ENCODE measurements at regions of chr3 and their contacts with region 1.

Region 1: GRCh38 chr3:155744626-155745324 is at the start of gene PLCH1:
- DNase-seq: peak; percentile 73
- ATAC-seq: peak; percentile 78
- H3K4me3 ChIP-seq: peak within 1 kb of the TSS; percentile 74 to 99 (median 76)
- H3K27ac ChIP-seq: peak within 1 kb of the TSS; percentile 62
- H3K4me1 ChIP-seq: peaks cover 65% of the 10 kb centered on the region
- H3K27me3 ChIP-seq: peaks cover 0 to 3% of the 10 kb centered on the region in 2 experiments; a peak in 2 of 5 replicates
- CTCF ChIP-seq: peak; percentile 27; the same call in 1 of the 2 replicates
- EP300 ChIP-seq: no peak
- POLR2A ChIP-seq: no peak
- RAD21 ChIP-seq: no peak
- total RNA-seq, gene PLCH1: 3.0 and 4.4 TPM in 2 replicates

Region 2: DNA sequence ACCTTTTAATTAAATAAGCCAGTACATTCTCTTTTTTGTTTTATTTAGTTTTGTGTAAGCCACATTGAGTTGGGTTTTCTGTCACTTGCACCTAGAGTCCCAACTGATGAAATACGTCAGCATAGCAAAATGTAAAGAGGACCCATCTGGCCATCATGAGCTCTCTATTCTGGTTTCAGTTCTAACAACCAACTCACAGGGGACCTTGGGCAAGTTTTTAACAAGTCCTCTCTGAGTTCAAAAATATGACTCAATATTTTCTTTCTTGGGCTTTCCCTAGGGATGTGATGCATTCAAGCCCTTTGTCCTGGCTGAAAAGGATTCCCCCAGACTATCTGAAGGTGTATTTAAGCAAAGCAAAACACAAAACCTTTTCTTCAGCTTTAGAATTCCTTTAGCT is 32.8 kb before region 1 on chr3:
- CTCF ChIA-PET with region 1: interaction called, 3 read pairs
- POLR2A ChIA-PET with region 1: no interaction called
- in situ Hi-C with region 1: no loop called
- intact Hi-C with region 1: loop called (anchors 1 kb)
- DNase-seq: no peak
- ATAC-seq: no peak
- H3K4me3 ChIP-seq: no peak overlapping the region
- H3K27ac ChIP-seq: no peak overlapping the region
- H3K4me1 ChIP-seq: peaks cover 40% of the 10 kb centered on the region
- H3K27me3 ChIP-seq: no peaks in the 10 kb centered on the region
- CTCF ChIP-seq: no peak
- EP300 ChIP-seq: no peak
- POLR2A ChIP-seq: no peak
- RAD21 ChIP-seq: no peak

Region 3: GRCh38 chr3:155778462-155778861 is 33.7 kb after region 1 on chr3:
- CTCF ChIA-PET with region 1: no interaction called
- POLR2A ChIA-PET with region 1: no interaction called
- in situ Hi-C with region 1: no loop called
- intact Hi-C with region 1: loop called (anchors 2 kb)
- DNase-seq: no peak
- ATAC-seq: no peak
- H3K4me3 ChIP-seq: no peak overlapping the region
- H3K27ac ChIP-seq: no peak overlapping the region
- H3K4me1 ChIP-seq: no peaks in the 10 kb centered on the region
- H3K27me3 ChIP-seq: no peaks in the 10 kb centered on the region
- CTCF ChIP-seq: no peak
- EP300 ChIP-seq: no peak
- POLR2A ChIP-seq: no peak
- RAD21 ChIP-seq: no peak

Region 4: GRCh38 chr3:155805802-155806618 is 61.2 kb after region 1 on chr3 and contains the start of gene C3orf33:
- CTCF ChIA-PET with region 1: no interaction called
- POLR2A ChIA-PET with region 1: interaction called, 38 read pairs
- in situ Hi-C with region 1: no loop called
- intact Hi-C with region 1: loop called (anchors 2 kb)
- DNase-seq: peak; percentile 30
- ATAC-seq: peak; percentile 93
- H3K4me3 ChIP-seq: peak within 1 kb of the TSS; percentile 87 to 95 (median 94)
- H3K27ac ChIP-seq: peak within 1 kb of the TSS; percentile 89
- H3K4me1 ChIP-seq: peaks cover 18% of the 10 kb centered on the region
- H3K27me3 ChIP-seq: no peaks in the 10 kb centered on the region
- CTCF ChIP-seq: peak; percentile 89
- EP300 ChIP-seq: peak in 1 of 2 experiments; percentile 3; a peak in 1 of 4 replicates
- POLR2A ChIP-seq: peak; percentile 5 to 44; a peak in 1 of 4 replicates
- RAD21 ChIP-seq: peak; percentile 86
- total RNA-seq, gene C3orf33: 8.2 and 12.6 TPM in 2 replicates

Region 5: DNA sequence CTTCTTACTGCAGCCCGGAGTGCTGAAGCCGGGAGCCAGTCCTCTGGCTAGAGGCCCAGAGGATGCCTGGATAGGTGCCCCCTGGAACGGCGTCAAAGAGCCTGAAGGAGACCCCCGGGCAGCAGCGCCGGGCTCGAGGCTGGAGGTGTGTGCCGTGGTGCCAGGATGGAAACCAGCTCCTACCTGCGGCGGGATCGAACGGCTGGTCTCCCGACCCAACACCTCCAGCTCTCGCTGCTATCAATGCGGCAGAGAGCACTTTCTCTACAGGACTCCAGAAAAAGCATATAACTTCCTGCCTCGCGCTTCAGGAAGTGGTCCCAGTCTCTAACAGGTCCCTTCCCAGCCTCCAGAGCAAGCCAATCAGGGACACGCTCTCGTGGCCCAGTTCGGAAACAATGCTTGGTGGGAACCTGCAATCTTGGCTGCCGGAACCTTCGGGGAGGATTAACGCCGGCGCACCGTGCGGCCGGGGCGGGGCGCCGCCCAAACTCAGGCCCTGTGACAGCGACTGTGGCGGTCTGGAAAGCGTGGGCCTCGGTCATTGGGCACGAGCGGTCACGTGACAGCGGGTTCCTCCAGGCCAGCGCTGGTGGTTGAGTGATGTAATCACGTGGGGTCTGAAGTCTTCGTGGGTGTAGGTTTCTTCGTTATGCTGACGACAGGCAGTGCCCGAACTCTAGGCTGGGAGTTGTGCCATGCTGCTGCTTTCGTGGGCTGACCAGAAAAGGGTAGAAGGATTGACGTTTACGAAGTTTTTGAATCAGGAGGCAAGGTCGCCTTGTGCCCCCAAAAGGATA is 109.6 kb after region 1 on chr3 and contains the start of gene SLC33A1:
- CTCF ChIA-PET with region 1: no interaction called
- POLR2A ChIA-PET with region 1: interaction called, 3 read pairs
- in situ Hi-C with region 1: no loop called
- intact Hi-C with region 1: loop called (anchors 5 kb)
- DNase-seq: peak; percentile 98
- ATAC-seq: peak; percentile 98
- H3K4me3 ChIP-seq: peak within 1 kb of the TSS; percentile 78 to 98 (median 89)
- H3K27ac ChIP-seq: peak within 1 kb of the TSS; percentile 97
- H3K4me1 ChIP-seq: peaks cover 35% of the 10 kb centered on the region
- H3K27me3 ChIP-seq: no peaks in the 10 kb centered on the region; a peak in 1 of 5 replicates
- CTCF ChIP-seq: peak; percentile 22
- EP300 ChIP-seq: peak in 1 of 2 experiments; percentile 61; a peak in 1 of 4 replicates
- POLR2A ChIP-seq: peak; percentile 86 to 94
- RAD21 ChIP-seq: peak; percentile 33; the same call in 1 of the 2 replicates
- total RNA-seq, gene SLC33A1: 23.2 and 32.1 TPM in 2 replicates

Region 6: DNA sequence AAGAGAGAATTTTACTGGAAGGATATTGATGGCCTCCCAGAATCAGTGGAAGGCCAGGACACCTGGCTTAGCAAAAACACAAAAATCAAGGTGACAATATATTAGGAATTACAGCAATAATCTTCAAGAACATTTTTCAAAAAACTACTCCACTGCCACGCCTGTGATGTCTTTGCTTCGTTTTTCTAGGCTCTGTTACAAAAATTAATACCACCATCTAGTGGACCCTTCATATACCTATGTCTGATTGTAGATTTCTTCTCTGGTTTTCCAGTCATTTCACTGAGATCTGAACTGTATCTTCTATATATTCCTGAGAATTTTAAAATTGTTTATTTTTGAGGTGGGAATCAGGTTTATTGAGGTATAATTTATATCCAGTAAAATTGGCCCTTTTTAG is 115.1 kb after region 1 on chr3:
- CTCF ChIA-PET with region 1: no interaction called
- POLR2A ChIA-PET with region 1: no interaction called
- in situ Hi-C with region 1: loop called (anchors 5 kb)
- intact Hi-C with region 1: no loop called
- DNase-seq: peak; percentile 44
- ATAC-seq: peak; percentile 79
- H3K4me3 ChIP-seq: peak overlapping the region in 2 of 3 experiments; percentile 29 to 42; a peak in 3 of 6 replicates
- H3K27ac ChIP-seq: no peak overlapping the region
- H3K4me1 ChIP-seq: peaks cover 28% of the 10 kb centered on the region
- H3K27me3 ChIP-seq: no peaks in the 10 kb centered on the region
- CTCF ChIP-seq: peak; percentile 54
- EP300 ChIP-seq: no peak
- POLR2A ChIP-seq: no peak
- RAD21 ChIP-seq: no peak